Activated T-helper 1 cell treated with anti-CD3 and anti-CD28 coated beads, Interleukin-12 subunit alpha, Interleukin-12 subunit beta, Interleukin-2, Interleukin-4 antibody, amounts not matched to agents 30 ng/mL and 10 ng/mL and 1 ng/mL, durations not matched to agents 14 hours and 24 hours and 36 hours (primary cell): ENCODE measurements at regions of chr17 and their contacts with region 1.

Region 1: GRCh38 chr17:82751571-82752370 is at the start of gene TBCD:
- DNase-seq: peak; percentile 81
- H3K4me3 Mint-ChIP-seq: peak within 1 kb of the TSS; percentile 90
- H3K27ac Mint-ChIP-seq: peak within 1 kb of the TSS; percentile 61
- H3K4me1 Mint-ChIP-seq: peaks cover 27% of the 10 kb centered on the region
- H3K27me3 Mint-ChIP-seq: peaks cover 4% of the 10 kb centered on the region
- total RNA-seq, gene TBCD: 106 and 111 TPM in 2 replicates

Region 2: DNA sequence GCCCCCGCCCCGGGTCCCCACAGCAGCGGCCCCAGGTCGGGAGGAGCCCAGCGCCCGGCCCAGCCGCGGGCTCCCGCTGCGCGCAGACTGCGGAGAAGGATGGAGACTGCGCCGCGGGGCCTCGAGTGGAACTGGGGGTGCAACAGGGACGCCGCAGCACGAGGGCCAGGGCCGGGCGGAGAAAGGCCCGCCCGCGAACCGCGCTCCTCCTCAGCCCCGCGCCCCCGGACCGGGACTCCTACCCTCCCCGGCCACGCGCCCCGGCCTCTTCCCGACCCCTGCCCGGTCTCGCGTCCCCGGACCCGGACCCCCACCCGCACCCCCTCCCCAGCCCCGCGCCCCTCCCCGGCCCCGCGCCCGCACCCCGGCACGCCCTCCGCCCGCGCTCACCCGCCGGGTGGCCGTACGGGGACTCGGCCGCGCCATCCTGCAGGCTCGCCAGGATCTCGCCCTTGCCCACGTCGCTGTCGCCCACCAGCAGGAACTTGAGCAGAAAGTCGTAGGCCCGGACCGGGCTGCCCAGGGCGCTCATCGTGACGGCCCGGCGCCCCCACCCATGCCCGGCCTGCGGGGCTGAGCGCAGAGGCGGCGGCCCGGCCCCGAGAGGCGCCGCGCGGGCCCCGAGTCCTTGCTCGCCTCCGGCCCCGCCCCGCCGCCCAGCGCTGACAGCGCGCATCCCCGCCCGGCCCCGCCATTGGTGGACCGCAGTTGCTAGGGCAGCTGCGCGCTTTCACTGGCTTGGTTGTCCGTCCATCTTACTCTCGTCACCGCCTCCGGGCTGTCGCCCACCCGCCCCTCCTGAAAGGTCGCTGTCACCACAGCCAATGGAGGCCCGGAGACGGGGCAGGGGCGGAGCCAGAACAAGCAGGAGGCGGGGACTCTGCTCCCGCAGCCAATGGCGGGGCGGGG is 53.5 kb before region 1 on chr17 and contains the start of gene RAB40B:
- intact Hi-C with region 1: loop called (anchors 1 kb)
- DNase-seq: peak; percentile 98
- H3K4me3 Mint-ChIP-seq: peak within 1 kb of the TSS; percentile 83
- H3K27ac Mint-ChIP-seq: no peak within 1 kb of the TSS
- H3K4me1 Mint-ChIP-seq: no peaks in the 10 kb centered on the region
- H3K27me3 Mint-ChIP-seq: peaks cover 10% of the 10 kb centered on the region
- total RNA-seq, gene RAB40B: 3.6 and 5.2 TPM in 2 replicates